HepG2 (cell line): ENCODE measurements at regions of chr6 and their contacts with region 1.

Region 1: GRCh38 chr6:129646642-129647041 is 63.3 kb downstream of the ARHGAP18 start:
- DNase-seq: no peak
- ATAC-seq: no peak
- H3K4me3 ChIP-seq: no peak overlapping the region
- H3K27ac ChIP-seq: peak overlapping the region; percentile 68
- H3K4me1 ChIP-seq: peaks cover 91% of the 10 kb centered on the region
- H3K27me3 ChIP-seq: no peaks in the 10 kb centered on the region
- CTCF ChIP-seq: no peak
- EP300 ChIP-seq: no peak
- POLR2A ChIP-seq: no peak
- RAD21 ChIP-seq: no peak

Region 2: DNA sequence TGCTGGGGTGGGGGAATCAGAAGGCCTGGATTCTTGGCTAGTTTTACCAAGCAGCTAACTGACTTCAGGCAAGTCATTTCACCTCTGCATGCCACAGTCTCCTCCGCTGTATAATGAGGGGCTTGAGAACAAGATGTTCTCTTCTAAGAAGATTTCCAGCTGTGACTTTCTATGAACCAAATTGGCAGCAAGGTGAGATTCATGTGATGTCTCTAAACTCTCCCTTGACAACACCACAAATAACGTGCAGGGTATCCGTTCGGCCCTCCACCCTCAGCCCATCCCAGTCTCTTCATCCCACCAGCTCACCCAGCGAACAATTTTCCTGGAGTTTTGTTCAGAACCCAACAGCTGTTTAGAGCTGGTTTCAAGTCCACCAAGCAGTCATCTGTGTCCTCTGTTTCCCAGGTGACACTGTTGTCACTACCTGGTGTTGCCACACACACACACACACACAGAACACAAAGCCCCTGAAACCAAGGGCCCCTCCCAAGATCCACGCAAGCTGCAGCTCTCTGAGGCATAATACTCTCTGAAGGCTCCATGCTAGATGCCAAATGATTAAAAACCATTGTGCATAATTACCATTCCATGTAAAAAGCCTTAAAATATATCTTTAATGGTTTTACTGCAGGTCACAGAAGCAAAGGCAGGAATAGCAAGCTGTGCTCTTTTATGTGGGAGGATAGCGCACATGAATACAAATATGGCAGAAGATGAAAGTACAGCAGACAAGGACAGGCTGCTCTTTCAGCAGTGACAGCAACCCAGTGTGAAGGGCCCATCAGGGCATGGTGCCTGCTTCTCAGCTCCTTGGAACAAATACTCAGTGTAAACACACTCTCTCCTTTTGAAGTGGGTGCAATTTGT is 15.1 kb after region 1 on chr6:
- CTCF ChIA-PET with region 1: no interaction called
- POLR2A ChIA-PET with region 1: interaction called, 11 read pairs
- in situ Hi-C with region 1: no loop called
- intact Hi-C with region 1: no loop called
- DNase-seq: peak; percentile 66
- ATAC-seq: peak; percentile 86
- H3K4me3 ChIP-seq: no peak overlapping the region
- H3K27ac ChIP-seq: peak overlapping the region; percentile 65
- H3K4me1 ChIP-seq: peaks cover 85% of the 10 kb centered on the region
- H3K27me3 ChIP-seq: no peaks in the 10 kb centered on the region
- CTCF ChIP-seq: no peak
- EP300 ChIP-seq: peak in 1 of 2 experiments; percentile 51; a peak in 3 of 4 replicates
- POLR2A ChIP-seq: no peak
- RAD21 ChIP-seq: no peak